ENCODE measurements at regions of chr11 and their contacts with region 1.

Region 1: DNA sequence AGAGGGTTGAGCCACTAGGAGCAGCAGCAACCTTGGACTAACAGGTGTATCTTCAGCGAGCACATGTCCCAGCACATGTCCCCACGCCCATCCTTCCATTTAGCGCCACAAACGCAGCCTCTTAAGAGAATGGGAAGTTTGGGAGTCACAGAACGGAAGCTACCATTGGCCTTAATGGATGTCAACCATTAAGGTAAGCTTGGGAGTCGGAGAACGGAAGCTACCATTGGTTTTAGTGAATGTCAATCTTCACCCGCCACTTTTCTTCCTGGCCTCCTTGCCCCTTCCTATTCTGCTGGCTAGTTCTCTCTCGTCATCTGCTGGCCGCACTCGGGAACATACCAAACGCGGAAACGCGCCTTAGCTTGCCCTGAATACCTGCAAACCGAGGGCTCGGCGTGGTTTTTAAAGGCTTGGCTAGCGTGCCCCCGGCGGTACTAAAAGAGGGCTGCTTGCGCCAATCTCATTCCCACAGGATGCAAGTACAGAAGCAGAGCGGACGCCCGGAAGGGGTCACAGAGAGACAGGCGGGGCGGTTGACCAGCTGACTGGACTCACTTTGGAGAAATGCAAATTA is 24.3 kb downstream of the GLYATL1 start:
- DNase-seq: no peak

Region 2: DNA sequence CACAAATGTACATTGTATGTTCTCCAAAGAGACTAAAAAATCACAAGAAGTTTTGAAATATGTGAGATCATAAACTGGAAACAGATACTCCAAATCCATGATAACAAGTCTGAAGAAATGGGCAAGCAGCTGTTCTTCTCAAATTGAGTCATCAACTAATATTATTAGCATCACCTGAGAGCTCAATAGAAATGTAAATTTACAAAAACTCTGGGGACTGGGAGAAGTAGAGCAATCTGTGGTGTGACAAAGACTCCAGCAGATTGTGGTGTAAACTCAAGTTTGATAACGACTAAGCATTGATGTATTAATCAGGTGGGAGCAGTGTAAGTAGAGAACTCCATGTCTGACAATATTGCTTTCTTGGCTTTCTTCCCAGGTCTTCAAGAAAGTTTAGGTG is 28.9 kb after region 1 on chr11:
- intact Hi-C with region 1: loop called in 1 of 2 experiments (anchors 1 kb)
- DNase-seq: no peak

Region 3: GRCh38 chr11:59011655-59012397 is 48.2 kb after region 1 on chr11:
- intact Hi-C with region 1: no loop called
- DNase-seq: no peak

Measured in posterior vena cava (tissue), 2 donors.